ENCODE measurements at regions of chr12 and their contacts with region 1.

Region 1: DNA sequence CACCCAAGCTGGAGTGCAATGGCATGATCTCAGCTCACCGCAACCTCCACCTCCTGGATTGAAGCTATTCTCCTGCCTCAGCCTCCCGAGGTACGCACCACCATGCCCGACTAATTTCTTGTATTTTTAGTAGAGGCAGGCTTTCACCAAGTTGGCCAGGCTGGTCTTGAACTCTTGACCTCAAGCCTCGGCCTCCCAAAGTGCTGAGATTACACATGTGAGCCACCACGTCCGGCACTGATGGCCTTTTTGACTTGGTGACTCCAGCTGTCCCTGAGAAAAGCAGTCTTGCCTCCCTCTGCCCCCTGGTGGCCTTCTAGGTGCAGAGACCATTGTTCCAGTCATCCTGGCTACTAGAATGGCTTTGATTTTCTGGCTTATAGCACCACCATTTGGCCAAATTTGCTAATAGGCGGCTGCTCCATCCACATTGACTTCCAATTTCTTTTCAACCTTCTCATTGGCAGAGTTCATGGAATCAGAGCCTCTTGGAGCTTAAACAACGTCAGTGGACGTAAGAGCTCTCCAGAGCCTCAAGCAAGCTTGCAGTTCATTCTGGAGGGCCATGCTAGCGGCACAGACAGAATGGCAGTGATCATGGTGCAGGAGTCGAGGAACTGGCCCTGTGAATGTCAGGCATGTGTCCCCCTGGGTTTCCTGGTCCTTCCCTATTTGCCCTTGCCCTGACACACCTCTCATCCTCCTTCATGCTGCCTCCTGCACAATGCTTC is 25.4 kb upstream of the EIF4B start:
- DNase-seq: peak; percentile 93
- ATAC-seq: peak; percentile 95
- H3K4me3 Mint-ChIP-seq: no peak overlapping the region
- H3K27ac Mint-ChIP-seq: no peak overlapping the region
- H3K4me1 Mint-ChIP-seq: no peaks in the 10 kb centered on the region
- H3K27me3 Mint-ChIP-seq: peaks cover 27% of the 10 kb centered on the region
- CTCF ChIP-seq: peak; percentile 97

Region 2: GRCh38 chr12:52358575-52359350 is 622.1 kb before region 1 on chr12:
- CTCF ChIA-PET with region 1: no interaction called
- POLR2A ChIA-PET with region 1: no interaction called
- intact Hi-C with region 1: no loop called
- DNase-seq: peak; percentile 64
- ATAC-seq: peak; percentile 97
- H3K4me3 Mint-ChIP-seq: no peak overlapping the region
- H3K27ac Mint-ChIP-seq: no peak overlapping the region
- H3K4me1 Mint-ChIP-seq: peaks cover 24% of the 10 kb centered on the region
- H3K27me3 Mint-ChIP-seq: no peaks in the 10 kb centered on the region
- CTCF ChIP-seq: no peak

Region 3: GRCh38 chr12:52380271-52380694 is 600.6 kb before region 1 on chr12:
- CTCF ChIA-PET with region 1: no interaction called
- POLR2A ChIA-PET with region 1: no interaction called
- intact Hi-C with region 1: loop called (anchors 10 kb)
- DNase-seq: peak; percentile 43
- ATAC-seq: no peak
- H3K4me3 Mint-ChIP-seq: no peak overlapping the region
- H3K27ac Mint-ChIP-seq: no peak overlapping the region
- H3K4me1 Mint-ChIP-seq: peaks cover 13% of the 10 kb centered on the region
- H3K27me3 Mint-ChIP-seq: no peaks in the 10 kb centered on the region
- CTCF ChIP-seq: peak; percentile 42

Region 4: DNA sequence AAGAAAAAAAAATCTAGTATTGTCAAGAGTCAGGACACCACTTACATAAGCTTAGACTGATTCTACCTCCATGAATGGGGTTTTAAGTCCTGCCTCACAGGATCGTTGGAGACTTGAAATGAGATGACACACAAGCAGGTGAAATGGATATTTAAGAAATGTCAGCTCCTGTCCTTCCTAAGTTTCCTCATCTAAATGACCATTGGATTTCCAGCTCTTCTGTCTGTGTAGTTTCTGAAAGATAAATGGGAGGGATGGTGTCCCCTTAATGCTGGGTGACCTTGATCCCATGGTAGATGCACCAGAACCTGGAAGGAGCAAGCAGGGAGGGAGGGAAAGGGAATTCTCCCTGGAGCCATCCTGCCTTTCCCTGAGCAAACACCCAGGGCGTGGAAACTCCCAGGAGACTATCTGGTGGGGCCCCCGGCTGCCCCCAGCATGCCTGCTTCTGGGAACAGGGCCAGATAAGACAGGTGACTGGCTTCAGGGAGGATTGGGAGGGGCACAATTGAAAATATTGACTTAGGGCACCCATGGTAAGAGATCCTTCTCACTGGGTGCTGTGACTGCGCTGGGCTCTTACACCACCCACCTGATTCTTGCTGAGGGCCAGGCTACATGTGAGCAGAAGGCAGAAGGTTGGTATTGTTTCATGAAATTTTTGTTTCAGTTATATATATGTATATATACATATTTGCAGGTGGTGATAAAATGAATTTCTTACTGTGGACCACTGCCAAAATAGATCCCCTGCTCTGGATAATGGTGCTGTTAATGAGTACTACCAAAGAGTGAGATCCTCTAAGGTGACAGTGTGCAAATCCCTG is 85.6 kb before region 1 on chr12:
- CTCF ChIA-PET with region 1: interaction called, 32 read pairs
- POLR2A ChIA-PET with region 1: no interaction called
- intact Hi-C with region 1: no loop called
- DNase-seq: no peak
- ATAC-seq: no peak
- H3K4me3 Mint-ChIP-seq: no peak overlapping the region
- H3K27ac Mint-ChIP-seq: no peak overlapping the region
- H3K4me1 Mint-ChIP-seq: no peaks in the 10 kb centered on the region
- H3K27me3 Mint-ChIP-seq: peaks cover 4% of the 10 kb centered on the region
- CTCF ChIP-seq: no peak

Region 5: GRCh38 chr12:52924764-52925716 is 55.8 kb before region 1 on chr12:
- CTCF ChIA-PET with region 1: interaction called, 11 read pairs
- POLR2A ChIA-PET with region 1: no interaction called
- intact Hi-C with region 1: no loop called
- DNase-seq: no peak
- ATAC-seq: no peak
- H3K4me3 Mint-ChIP-seq: no peak overlapping the region
- H3K27ac Mint-ChIP-seq: no peak overlapping the region
- H3K4me1 Mint-ChIP-seq: peaks cover 6% of the 10 kb centered on the region
- H3K27me3 Mint-ChIP-seq: peaks cover 2% of the 10 kb centered on the region
- CTCF ChIP-seq: no peak

Region 6: GRCh38 chr12:52956987-52957386 is 23.9 kb before region 1 on chr12:
- CTCF ChIA-PET with region 1: interaction called, 25 read pairs
- POLR2A ChIA-PET with region 1: no interaction called
- intact Hi-C with region 1: no loop called
- DNase-seq: no peak
- ATAC-seq: no peak
- H3K4me3 Mint-ChIP-seq: no peak overlapping the region
- H3K27ac Mint-ChIP-seq: no peak overlapping the region
- H3K4me1 Mint-ChIP-seq: no peaks in the 10 kb centered on the region
- H3K27me3 Mint-ChIP-seq: no peaks in the 10 kb centered on the region
- CTCF ChIP-seq: no peak

Region 7: DNA sequence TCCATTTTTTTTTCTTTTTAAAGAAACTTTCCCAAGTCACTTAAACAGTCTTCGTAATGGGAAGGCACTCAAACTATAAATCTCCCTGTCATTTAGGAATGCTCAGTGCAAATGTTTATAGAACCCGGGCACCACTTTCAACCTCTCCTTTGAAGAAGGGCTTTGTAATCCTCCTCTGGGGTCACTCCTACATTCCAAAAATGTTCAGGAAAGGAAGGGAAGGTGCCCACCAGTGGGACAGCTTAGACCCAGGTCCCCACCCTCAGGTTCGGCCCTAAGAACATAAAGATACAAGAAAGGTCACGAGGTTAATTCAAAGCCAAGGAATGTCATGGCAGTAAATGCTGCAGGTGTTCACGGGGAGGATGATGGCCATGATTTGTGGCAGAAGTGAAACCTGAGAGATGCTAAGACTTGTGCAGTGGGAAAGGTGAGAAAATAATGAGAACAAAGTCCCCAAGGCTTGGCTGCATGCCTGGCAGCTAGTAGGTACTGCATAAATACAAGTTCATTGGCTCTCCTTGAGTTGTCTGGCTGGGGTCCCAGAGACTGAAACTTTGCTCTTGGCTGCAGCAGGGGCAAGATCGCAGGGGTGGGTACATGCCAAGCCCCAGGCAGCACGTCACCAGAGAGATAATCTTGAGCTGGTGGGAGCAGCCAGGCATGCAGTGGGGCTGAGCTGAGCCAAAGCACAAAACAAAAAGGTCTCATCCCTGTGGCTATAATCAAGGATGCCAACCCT is 10.9 kb before region 1 on chr12:
- CTCF ChIA-PET with region 1: interaction called, 13 read pairs
- POLR2A ChIA-PET with region 1: no interaction called
- intact Hi-C with region 1: no loop called
- DNase-seq: no peak
- ATAC-seq: no peak
- H3K4me3 Mint-ChIP-seq: no peak overlapping the region
- H3K27ac Mint-ChIP-seq: no peak overlapping the region
- H3K4me1 Mint-ChIP-seq: no peaks in the 10 kb centered on the region
- H3K27me3 Mint-ChIP-seq: peaks cover 5% of the 10 kb centered on the region
- CTCF ChIP-seq: no peak

Region 8: GRCh38 chr12:53005986-53006809 is 25.3 kb after region 1 on chr12 and contains the start of gene EIF4B:
- CTCF ChIA-PET with region 1: interaction called, 17 read pairs
- POLR2A ChIA-PET with region 1: no interaction called
- intact Hi-C with region 1: no loop called
- DNase-seq: peak; percentile 100
- ATAC-seq: peak; percentile 94
- H3K4me3 Mint-ChIP-seq: peak within 1 kb of the TSS; percentile 86
- H3K27ac Mint-ChIP-seq: peak within 1 kb of the TSS; percentile 99
- H3K4me1 Mint-ChIP-seq: peaks cover 29% of the 10 kb centered on the region
- H3K27me3 Mint-ChIP-seq: no peaks in the 10 kb centered on the region
- CTCF ChIP-seq: no peak
- total RNA-seq, gene EIF4B: 789 to 814 TPM

Measured in activated CD8-positive, alpha-beta T cell treated with anti-CD3 and anti-CD28 coated beads for 36 hours (primary cell).